Stomach (tissue), 19 donors: ENCODE measurements at regions of chr10 and their contacts with region 1.

Region 1: DNA sequence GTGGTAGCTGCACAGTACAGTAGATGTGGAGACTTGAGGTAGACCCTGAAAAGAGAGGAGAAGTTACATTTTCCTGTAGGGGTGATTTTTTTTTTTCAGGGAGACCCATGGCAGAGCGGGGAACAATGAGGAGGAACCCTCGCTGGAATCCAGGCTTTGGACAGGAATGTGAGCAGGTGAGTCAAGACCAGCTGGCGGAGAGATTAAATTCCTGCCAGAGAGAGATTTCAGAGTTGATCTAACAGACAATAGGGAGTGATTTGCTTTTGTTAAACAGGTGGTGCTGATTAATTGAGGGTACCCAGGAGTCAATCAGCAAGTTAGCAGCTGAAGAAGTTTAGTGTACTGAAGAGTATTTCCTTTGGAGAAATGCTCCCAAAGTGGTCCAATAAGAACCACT is 41.6 kb upstream of the MINDY3 start:
- DNase-seq: no peak
- H3K4me3 ChIP-seq: no peak overlapping the region
- H3K27ac ChIP-seq: no peak overlapping the region
- H3K4me1 ChIP-seq: no peaks in the 10 kb centered on the region
- H3K27me3 ChIP-seq: peaks cover 0 to 27% (median 4%) of the 10 kb centered on the region in 3 donors
- CTCF ChIP-seq: no peak
- EP300 ChIP-seq: no peak
- POLR2A ChIP-seq: no peak

Region 2: DNA sequence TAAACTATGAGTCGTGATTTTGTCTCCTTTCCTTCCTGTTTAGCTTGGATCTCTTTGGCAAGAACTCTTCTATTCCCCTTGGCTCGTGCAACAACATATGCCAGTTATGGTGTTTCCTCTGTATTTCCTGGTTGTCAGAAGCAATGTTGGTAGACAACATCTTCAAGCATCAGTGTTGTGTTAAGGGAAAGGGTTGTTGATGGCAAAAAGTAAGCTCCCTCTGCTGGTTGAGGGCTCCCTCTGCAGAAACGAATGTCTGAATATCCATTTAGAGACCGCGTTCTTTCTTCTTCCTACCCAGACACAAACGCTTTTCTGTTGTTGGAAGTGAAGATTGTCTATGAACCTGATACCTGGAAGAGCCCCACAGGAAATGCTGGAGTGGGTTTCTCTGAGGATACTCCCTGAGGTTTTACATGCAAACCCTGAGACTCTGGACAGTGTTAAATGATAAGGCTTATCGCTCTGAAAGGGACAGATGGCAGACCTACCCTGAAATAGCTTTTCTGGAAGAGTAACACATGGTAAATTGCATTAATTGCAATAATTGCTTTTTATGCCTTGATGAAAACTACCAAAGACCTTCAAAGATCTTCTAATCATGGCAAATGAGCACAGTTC is 643.3 kb after region 1 on chr10:
- intact Hi-C with region 1: loop called (anchors 10 kb)
- DNase-seq: peak in 1 of 2 donors; percentile 43
- H3K4me3 ChIP-seq: no peak overlapping the region
- H3K27ac ChIP-seq: no peak overlapping the region
- H3K4me1 ChIP-seq: peaks cover 0 to 7% (median 0%) of the 10 kb centered on the region in 4 donors
- H3K27me3 ChIP-seq: no peaks in the 10 kb centered on the region
- CTCF ChIP-seq: peak in 5 of 7 experiments; percentile 29 to 67 (median 49)
- EP300 ChIP-seq: no peak
- POLR2A ChIP-seq: no peak